Endothelial cell of umbilical vein (primary cell): ENCODE measurements at regions of chr3 and their contacts with region 1.

Region 1: GRCh38 chr3:149310796-149311534 is 22.5 kb downstream of the TM4SF18 start:
- DNase-seq: no peak
- H3K4me3 ChIP-seq: no peak overlapping the region
- H3K27ac ChIP-seq: no peak overlapping the region
- H3K4me1 ChIP-seq: peaks cover 3% of the 10 kb centered on the region
- H3K27me3 ChIP-seq: no peaks in the 10 kb centered on the region
- CTCF ChIP-seq: no peak
- POLR2A ChIP-seq: no peak

Region 2: GRCh38 chr3:149299938-149300791 is 10.8 kb before region 1 on chr3:
- CTCF ChIA-PET with region 1: interaction called, 23 read pairs
- POLR2A ChIA-PET with region 1: interaction called, 3 read pairs
- dilution Hi-C with region 1: no loop called
- intact Hi-C with region 1: no loop called
- DNase-seq: peak; percentile 90
- H3K4me3 ChIP-seq: no peak overlapping the region
- H3K27ac ChIP-seq: peak overlapping the region; percentile 45
- H3K4me1 ChIP-seq: peaks cover 11% of the 10 kb centered on the region
- H3K27me3 ChIP-seq: no peaks in the 10 kb centered on the region
- CTCF ChIP-seq: no peak
- POLR2A ChIP-seq: no peak

Region 3: DNA sequence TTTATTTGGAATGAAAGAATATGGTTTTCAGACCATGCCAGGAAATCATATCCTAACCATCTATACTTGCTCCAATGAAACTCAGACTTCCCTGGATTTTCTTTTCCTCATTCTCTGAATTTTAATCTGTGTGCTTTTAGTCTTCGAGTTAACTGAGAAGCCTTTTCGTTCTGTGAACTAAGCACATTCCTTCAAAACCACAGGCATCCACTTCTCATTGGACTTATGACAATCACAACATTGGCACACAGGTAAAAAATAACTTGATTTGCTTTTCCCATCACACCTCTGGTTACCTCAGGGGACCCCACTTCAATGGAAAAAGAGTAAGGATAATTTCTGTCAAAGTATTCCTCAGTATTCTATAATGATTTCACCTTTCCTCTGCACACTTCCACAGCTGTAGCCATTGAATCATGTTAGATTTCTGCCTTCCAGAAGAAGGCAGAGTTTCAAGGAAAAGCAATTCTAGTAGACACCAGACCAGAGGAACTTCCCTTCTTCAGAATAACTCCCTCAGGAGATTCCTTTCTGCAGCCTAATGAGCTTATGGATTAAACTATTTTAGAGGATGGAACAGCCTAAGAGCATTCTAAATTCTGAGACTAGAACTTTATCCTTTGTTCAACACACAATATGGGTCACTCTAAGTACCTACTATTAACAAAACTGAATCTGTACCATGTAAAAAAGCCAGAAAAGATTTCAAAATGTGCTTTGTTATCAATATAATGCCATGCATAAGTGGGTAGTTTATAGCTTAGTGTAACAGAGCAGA is 425.4 kb after region 1 on chr3:
- CTCF ChIA-PET with region 1: no interaction called
- POLR2A ChIA-PET with region 1: no interaction called
- dilution Hi-C with region 1: no loop called
- intact Hi-C with region 1: no loop called
- DNase-seq: peak; percentile 29
- H3K4me3 ChIP-seq: no peak overlapping the region
- H3K27ac ChIP-seq: no peak overlapping the region
- H3K4me1 ChIP-seq: no peaks in the 10 kb centered on the region
- H3K27me3 ChIP-seq: no peaks in the 10 kb centered on the region
- CTCF ChIP-seq: no peak
- POLR2A ChIP-seq: no peak